ENCODE measurements at regions of chr5 and their contacts with region 1.

Region 1: GRCh38 chr5:54743997-54744788 is 226.6 kb downstream of the SNX18 start:
- DNase-seq: peak; percentile 52 to 95
- H3K4me3 ChIP-seq: no peak overlapping the region
- H3K27ac ChIP-seq: peak overlapping the region; percentile 88
- H3K4me1 ChIP-seq: peaks cover 52% of the 10 kb centered on the region
- H3K27me3 ChIP-seq: no peaks in the 10 kb centered on the region
- CTCF ChIP-seq: no peak

Region 2: GRCh38 chr5:54651482-54652076 is 92.6 kb before region 1 on chr5:
- CTCF ChIA-PET with region 1: no interaction called
- POLR2A ChIA-PET with region 1: no interaction called
- intact Hi-C with region 1: loop called (anchors 10 kb)
- DNase-seq: peak; percentile 22 to 49
- H3K4me3 ChIP-seq: no peak overlapping the region
- H3K27ac ChIP-seq: no peak overlapping the region
- H3K4me1 ChIP-seq: no peaks in the 10 kb centered on the region
- H3K27me3 ChIP-seq: no peaks in the 10 kb centered on the region
- CTCF ChIP-seq: no peak

Region 3: DNA sequence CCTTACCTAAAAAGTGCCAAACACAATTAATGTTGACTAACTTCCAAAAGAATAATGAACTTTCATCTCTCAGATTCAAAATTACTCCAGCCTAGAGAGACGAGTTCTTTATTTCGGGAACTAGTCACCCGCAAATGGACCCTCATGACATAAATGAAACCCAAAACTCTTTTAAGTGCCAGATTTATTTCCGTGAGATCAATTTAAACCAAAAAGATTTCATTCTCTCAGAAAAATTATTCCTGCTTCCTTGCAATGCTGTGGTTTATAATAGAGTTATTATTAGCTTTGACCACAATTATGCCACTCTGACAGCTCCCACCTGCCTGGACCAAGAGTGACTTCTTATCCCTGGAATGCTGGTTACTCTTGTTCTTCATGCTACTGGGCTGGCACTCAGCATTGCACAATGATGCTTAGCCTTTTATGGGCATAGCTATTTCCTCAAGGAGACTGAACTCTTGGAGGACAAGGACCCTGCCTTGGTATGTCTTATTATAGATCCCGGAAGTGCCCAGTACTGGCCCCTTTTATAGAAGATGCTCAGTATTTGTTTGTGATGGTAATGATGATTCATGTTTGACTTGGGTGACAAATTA is 43.1 kb before region 1 on chr5:
- CTCF ChIA-PET with region 1: interaction called, 3 read pairs
- POLR2A ChIA-PET with region 1: no interaction called
- intact Hi-C with region 1: loop called (anchors 1 kb)
- DNase-seq: peak; percentile 79 to 100
- H3K4me3 ChIP-seq: peak overlapping the region; percentile 30; the same call in 1 of the 2 replicates
- H3K27ac ChIP-seq: peak overlapping the region; percentile 90
- H3K4me1 ChIP-seq: peaks cover 44% of the 10 kb centered on the region
- H3K27me3 ChIP-seq: no peaks in the 10 kb centered on the region
- CTCF ChIP-seq: no peak

Region 4: GRCh38 chr5:54844905-54845566 is 100.8 kb after region 1 on chr5:
- CTCF ChIA-PET with region 1: interaction called, 3 read pairs
- POLR2A ChIA-PET with region 1: no interaction called
- intact Hi-C with region 1: loop called (anchors 5 kb)
- DNase-seq: peak in 1 of 2 experiments; percentile 42
- H3K4me3 ChIP-seq: no peak overlapping the region
- H3K27ac ChIP-seq: no peak overlapping the region
- H3K4me1 ChIP-seq: no peaks in the 10 kb centered on the region
- H3K27me3 ChIP-seq: no peaks in the 10 kb centered on the region
- CTCF ChIP-seq: peak; percentile 88